HCT116 (cell line): ENCODE measurements at regions of chr18 and their contacts with region 1.

Region 1: GRCh38 chr18:25614168-25614567 is 262.2 kb upstream of the ZNF521 start:
- DNase-seq: no peak
- ATAC-seq: no peak
- H3K4me3 ChIP-seq: no peak overlapping the region
- H3K27ac ChIP-seq: no peak overlapping the region
- H3K4me1 ChIP-seq: no peaks in the 10 kb centered on the region
- H3K27me3 ChIP-seq: no peaks in the 10 kb centered on the region
- CTCF ChIP-seq: 0 out of 6 replicates have a peak, but pooled peaks of 1 of the 3 experiments have one; percentile 11
- POLR2A ChIP-seq: no peak
- RAD21 ChIP-seq: no peak

Region 2: DNA sequence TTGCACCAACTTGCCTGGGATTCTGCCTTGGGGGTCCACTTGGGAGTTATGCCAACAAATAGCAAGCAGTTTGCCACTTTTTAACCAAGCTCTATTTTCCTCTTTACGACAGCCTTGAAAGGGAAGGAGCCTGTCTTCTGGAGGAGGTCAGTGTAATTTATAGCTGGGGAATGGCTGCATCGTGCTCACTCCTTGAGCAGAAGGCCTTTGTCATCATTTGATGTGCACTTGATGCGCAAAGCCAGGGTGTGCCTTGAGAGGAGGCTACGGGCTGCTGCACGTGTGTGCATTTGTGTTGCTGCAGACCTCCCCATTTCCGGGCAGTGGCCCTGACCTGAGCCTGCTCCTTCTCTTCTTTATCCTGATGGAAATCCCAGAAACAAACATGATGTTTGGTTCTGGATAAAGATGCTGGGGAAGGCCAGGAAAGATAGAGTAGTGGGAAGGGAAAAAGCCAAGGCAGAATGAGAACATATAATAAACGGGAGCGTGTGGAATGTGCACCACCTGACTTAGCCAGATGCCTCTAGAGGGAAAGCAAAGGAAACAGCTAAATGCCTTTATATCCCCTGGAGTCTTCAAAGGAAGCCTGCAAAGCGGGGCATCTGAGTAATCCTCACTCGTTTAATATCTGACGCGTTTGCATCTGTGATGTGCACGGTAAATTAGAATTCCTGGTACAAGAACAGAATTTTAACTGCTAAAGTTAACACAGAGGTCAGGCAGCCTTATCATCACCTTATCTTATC is 193.9 kb before region 1 on chr18:
- CTCF ChIA-PET with region 1: no interaction called
- POLR2A ChIA-PET with region 1: no interaction called
- RAD21 ChIA-PET with region 1: no interaction called
- intact Hi-C with region 1: loop called (anchors 10 kb)
- DNase-seq: no peak
- ATAC-seq: no peak
- H3K4me3 ChIP-seq: no peak overlapping the region
- H3K27ac ChIP-seq: no peak overlapping the region
- H3K4me1 ChIP-seq: no peaks in the 10 kb centered on the region
- H3K27me3 ChIP-seq: no peaks in the 10 kb centered on the region
- CTCF ChIP-seq: no peak
- POLR2A ChIP-seq: no peak
- RAD21 ChIP-seq: no peak